ENCODE measurements at regions of chr12 and their contacts with region 1.

Region 1: GRCh38 chr12:116818948-116819832 is 62.1 kb downstream of the HRK start:
- DNase-seq: peak; percentile 96
- H3K4me3 ChIP-seq: peak overlapping the region; percentile 68 to 80 (median 72)
- H3K27ac ChIP-seq: peak overlapping the region; percentile 92 to 96 (median 94)
- H3K4me1 ChIP-seq: peaks cover 9 to 19% (median 12%) of the 10 kb centered on the region in 4 donors
- H3K27me3 ChIP-seq: no peaks in the 10 kb centered on the region
- CTCF ChIP-seq: peak in 1 of 3 experiments; percentile 17
- EP300 ChIP-seq: no peak
- POLR2A ChIP-seq: no peak

Region 2: DNA sequence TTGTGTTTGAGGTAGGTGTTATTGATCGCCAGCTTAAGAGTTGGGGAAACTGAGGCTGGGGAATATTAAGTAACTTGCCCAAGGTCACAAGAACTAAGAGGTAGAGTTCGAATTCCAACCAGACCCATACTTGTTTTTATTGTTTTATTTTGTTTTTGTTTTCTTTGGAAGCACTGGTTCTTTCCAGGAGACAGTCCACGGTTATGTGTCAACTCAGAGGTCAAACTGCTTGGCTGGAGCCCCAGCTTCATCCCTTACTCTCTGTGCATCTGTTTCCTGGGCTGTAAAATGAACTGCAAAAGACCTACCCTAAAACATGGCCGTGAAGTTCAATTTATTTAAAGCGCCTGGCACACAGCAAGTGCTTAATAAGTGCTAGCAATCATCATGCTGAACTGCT is 334.4 kb before region 1 on chr12:
- intact Hi-C with region 1: no loop called
- DNase-seq: no peak
- H3K4me3 ChIP-seq: no peak overlapping the region
- H3K27ac ChIP-seq: no peak overlapping the region
- H3K4me1 ChIP-seq: peaks cover 0 to 7% (median 0%) of the 10 kb centered on the region in 4 donors
- H3K27me3 ChIP-seq: peaks cover 0 to 8% (median 0%) of the 10 kb centered on the region in 4 donors
- CTCF ChIP-seq: no peak
- EP300 ChIP-seq: no peak
- POLR2A ChIP-seq: no peak

Region 3: GRCh38 chr12:116577154-116577561 is 242.0 kb before region 1 on chr12:
- intact Hi-C with region 1: no loop called
- DNase-seq: no peak
- H3K4me3 ChIP-seq: no peak overlapping the region
- H3K27ac ChIP-seq: no peak overlapping the region
- H3K4me1 ChIP-seq: peaks cover 0 to under 1% (median 0%) of the 10 kb centered on the region in 4 donors
- H3K27me3 ChIP-seq: no peaks in the 10 kb centered on the region
- CTCF ChIP-seq: no peak
- EP300 ChIP-seq: no peak
- POLR2A ChIP-seq: no peak

Region 4: GRCh38 chr12:116737774-116738700 is 81.2 kb before region 1 on chr12 and contains the starts of genes RNFT2 and SPRING1:
- intact Hi-C with region 1: loop called (anchors 5 kb)
- DNase-seq: peak; percentile 100
- H3K4me3 ChIP-seq: peak within 1 kb of the TSS; percentile 89 to 98 (median 94)
- H3K27ac ChIP-seq: peak within 1 kb of the TSS; percentile 76 to 85 (median 78)
- H3K4me1 ChIP-seq: peaks cover 14 to 22% (median 19%) of the 10 kb centered on the region in 4 donors
- H3K27me3 ChIP-seq: no peaks in the 10 kb centered on the region
- CTCF ChIP-seq: peak in 1 of 3 experiments; percentile 32
- EP300 ChIP-seq: no peak
- POLR2A ChIP-seq: peak; percentile 27
- total RNA-seq, gene RNFT2: 0.17 to 0.63 (median 0.34) TPM
- total RNA-seq, gene SPRING1: 6.2 to 19.2 (median 16.3) TPM

Region 5: GRCh38 chr12:116910645-116911451 is 91.7 kb after region 1 on chr12 and contains the start of gene FBXW8:
- intact Hi-C with region 1: loop called (anchors 10 kb)
- DNase-seq: no peak
- H3K4me3 ChIP-seq: peak within 1 kb of the TSS; percentile 76 to 98 (median 88)
- H3K27ac ChIP-seq: peak within 1 kb of the TSS; percentile 80 to 92 (median 86)
- H3K4me1 ChIP-seq: peaks cover 2 to 27% (median 24%) of the 10 kb centered on the region in 4 donors
- H3K27me3 ChIP-seq: no peaks in the 10 kb centered on the region
- CTCF ChIP-seq: no peak
- EP300 ChIP-seq: no peak
- POLR2A ChIP-seq: no peak
- total RNA-seq, gene FBXW8: 11.9 to 13.9 (median 13.3) TPM

Region 6: GRCh38 chr12:117105902-117106301 is 286.7 kb after region 1 on chr12:
- intact Hi-C with region 1: no loop called
- DNase-seq: no peak
- H3K4me3 ChIP-seq: no peak overlapping the region
- H3K27ac ChIP-seq: no peak overlapping the region
- H3K4me1 ChIP-seq: no peaks in the 10 kb centered on the region
- H3K27me3 ChIP-seq: peaks cover 0 to 18% (median 7%) of the 10 kb centered on the region in 4 donors
- CTCF ChIP-seq: no peak
- EP300 ChIP-seq: no peak
- POLR2A ChIP-seq: no peak

Measured in esophagus muscularis mucosa (tissue), 4 donors.